ENCODE measurements at regions of chrX and their contacts with region 1.

Region 1: GRCh38 chrX:134908356-134908755 is 82.4 kb upstream of the SMIM10 start:
- DNase-seq: peak; percentile 10 to 56 (median 20)
- ATAC-seq: peak; percentile 91
- H3K4me3 ChIP-seq: no peak overlapping the region
- H3K27ac ChIP-seq: no peak overlapping the region
- H3K4me1 ChIP-seq: peaks cover 8 to 10% of the 10 kb centered on the region in 2 experiments; a peak in 4 of 5 replicates
- H3K27me3 ChIP-seq: no peaks in the 10 kb centered on the region
- CTCF ChIP-seq: peak; percentile 23 to 66 (median 60); a peak in 4 of 6 replicates
- EP300 ChIP-seq: no peak
- POLR2A ChIP-seq: no peak
- RAD21 ChIP-seq: peak; percentile 70 to 72

Region 2: DNA sequence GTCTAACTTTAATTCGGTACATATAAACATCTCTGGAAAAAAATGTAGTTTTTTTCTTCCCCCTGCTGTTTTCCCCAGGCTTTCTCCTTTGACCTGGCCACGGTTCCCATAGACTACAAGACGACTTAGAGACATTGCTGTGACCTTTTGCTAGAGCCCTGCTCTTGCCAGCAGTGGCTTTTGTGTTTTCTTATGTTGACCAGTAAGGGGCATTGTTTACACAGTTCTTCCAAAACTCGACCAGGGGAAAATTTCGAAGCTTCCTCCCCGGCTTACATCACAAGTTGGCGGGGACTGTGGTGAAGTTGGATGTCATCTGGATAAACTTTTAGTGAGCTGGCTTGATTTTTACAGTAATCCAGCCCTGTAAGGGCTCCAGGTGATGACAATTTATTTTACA is 662.1 kb before region 1 on chrX:
- CTCF ChIA-PET with region 1: no interaction called
- POLR2A ChIA-PET with region 1: no interaction called
- in situ Hi-C with region 1: no loop called
- intact Hi-C with region 1: loop called (anchors 10 kb)
- DNase-seq: peak in 2 of 4 experiments; percentile 11 to 26
- ATAC-seq: peak; percentile 72
- H3K4me3 ChIP-seq: no peak overlapping the region
- H3K27ac ChIP-seq: no peak overlapping the region
- H3K4me1 ChIP-seq: no peaks in the 10 kb centered on the region
- H3K27me3 ChIP-seq: no peaks in the 10 kb centered on the region
- CTCF ChIP-seq: peak; percentile 7 to 39 (median 26); a peak in 3 of 6 replicates
- EP300 ChIP-seq: no peak
- POLR2A ChIP-seq: no peak
- RAD21 ChIP-seq: peak; percentile 48 to 50; a peak in 3 of 4 replicates

Region 3: DNA sequence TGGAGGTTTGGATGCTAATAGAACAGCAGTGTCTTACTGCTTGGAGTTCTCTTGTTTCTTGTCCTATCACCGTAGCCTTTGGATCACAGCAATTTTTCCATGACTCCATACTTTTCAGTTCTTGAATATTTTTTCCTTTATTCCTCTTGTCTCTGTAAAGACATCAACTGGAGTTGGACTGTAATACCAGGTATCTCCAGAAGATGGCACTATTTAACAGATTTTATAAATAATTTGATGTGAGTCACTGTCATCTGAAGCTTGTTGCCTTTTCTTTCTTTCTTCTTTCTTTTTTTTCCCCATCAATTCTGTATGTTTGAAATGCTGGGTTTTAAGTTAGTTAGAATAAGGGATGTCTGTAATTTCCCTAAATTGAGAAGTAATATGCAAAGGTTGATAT is 424.3 kb before region 1 on chrX:
- CTCF ChIA-PET with region 1: interaction called, 3 read pairs
- POLR2A ChIA-PET with region 1: no interaction called
- in situ Hi-C with region 1: no loop called
- intact Hi-C with region 1: loop called (anchors 5 kb)
- DNase-seq: peak; percentile 10 to 57 (median 17)
- ATAC-seq: peak; percentile 64; the same call in 2 of the 3 replicates
- H3K4me3 ChIP-seq: no peak overlapping the region
- H3K27ac ChIP-seq: no peak overlapping the region
- H3K4me1 ChIP-seq: no peaks in the 10 kb centered on the region
- H3K27me3 ChIP-seq: no peaks in the 10 kb centered on the region
- CTCF ChIP-seq: peak; percentile 33 to 63 (median 48); a peak in 4 of 6 replicates
- EP300 ChIP-seq: no peak
- POLR2A ChIP-seq: no peak
- RAD21 ChIP-seq: peak; percentile 67 to 68

Region 4: DNA sequence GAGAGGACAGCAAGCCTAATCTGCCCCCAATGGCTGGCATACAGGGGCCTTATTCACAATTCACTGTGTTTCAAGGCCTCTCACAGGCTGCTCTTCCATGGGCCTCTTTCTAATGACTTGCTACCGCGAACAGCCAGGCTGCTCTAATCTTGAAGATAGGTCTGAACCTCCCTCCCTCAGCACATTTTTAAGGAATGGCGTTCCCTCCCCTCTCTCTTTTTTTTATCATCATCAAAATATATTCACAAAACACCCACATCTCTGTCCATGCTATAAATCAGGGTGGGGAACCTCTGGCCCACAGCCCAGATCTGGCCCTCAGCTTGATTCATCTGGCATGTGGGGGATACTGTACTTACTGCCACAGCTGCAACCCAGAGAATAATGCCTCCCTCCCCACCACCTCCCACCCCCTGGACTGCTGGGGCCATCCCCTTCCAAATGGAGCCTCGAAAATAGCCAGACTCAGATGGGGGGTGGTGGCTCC is 173.8 kb before region 1 on chrX:
- CTCF ChIA-PET with region 1: no interaction called
- POLR2A ChIA-PET with region 1: interaction called, 4 read pairs
- in situ Hi-C with region 1: no loop called
- intact Hi-C with region 1: loop called (anchors 10 kb)
- DNase-seq: no peak
- ATAC-seq: no peak
- H3K4me3 ChIP-seq: no peak overlapping the region
- H3K27ac ChIP-seq: no peak overlapping the region
- H3K4me1 ChIP-seq: peaks cover 0 to 17% of the 10 kb centered on the region in 2 experiments; a peak in 4 of 5 replicates
- H3K27me3 ChIP-seq: no peaks in the 10 kb centered on the region; a peak in 1 of 5 replicates
- CTCF ChIP-seq: no peak
- EP300 ChIP-seq: no peak
- POLR2A ChIP-seq: no peak
- RAD21 ChIP-seq: no peak

Region 5: DNA sequence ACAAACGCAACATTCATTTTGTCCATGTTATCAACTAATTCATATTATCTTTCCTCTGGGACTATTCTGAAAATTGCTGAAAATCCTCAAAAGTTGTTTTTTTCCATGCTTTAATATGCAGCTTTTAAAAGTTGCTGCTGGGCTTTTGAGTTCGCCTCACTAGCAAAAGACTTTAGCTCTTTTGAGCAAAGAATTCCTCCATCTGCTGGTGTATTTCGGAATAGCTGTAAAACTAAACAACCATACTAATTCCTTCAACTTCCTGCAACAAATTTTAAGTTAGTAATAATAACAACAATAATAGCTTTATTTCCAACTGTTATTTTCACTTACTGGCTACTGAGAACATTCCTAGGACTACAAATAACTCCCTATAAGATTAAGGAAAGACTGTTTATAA is 125.6 kb before region 1 on chrX:
- CTCF ChIA-PET with region 1: no interaction called
- POLR2A ChIA-PET with region 1: no interaction called
- in situ Hi-C with region 1: loop called (anchors 10 kb)
- intact Hi-C with region 1: no loop called
- DNase-seq: peak in 1 of 4 experiments; percentile 35
- ATAC-seq: 0 out of 3 replicates have a peak, but pooled peaks have one; percentile 42
- H3K4me3 ChIP-seq: no peak overlapping the region
- H3K27ac ChIP-seq: no peak overlapping the region
- H3K4me1 ChIP-seq: no peaks in the 10 kb centered on the region
- H3K27me3 ChIP-seq: no peaks in the 10 kb centered on the region
- CTCF ChIP-seq: peak; percentile 32 to 52 (median 43); a peak in 5 of 6 replicates
- EP300 ChIP-seq: no peak
- POLR2A ChIP-seq: no peak
- RAD21 ChIP-seq: peak; percentile 57 to 65

Region 6: DNA sequence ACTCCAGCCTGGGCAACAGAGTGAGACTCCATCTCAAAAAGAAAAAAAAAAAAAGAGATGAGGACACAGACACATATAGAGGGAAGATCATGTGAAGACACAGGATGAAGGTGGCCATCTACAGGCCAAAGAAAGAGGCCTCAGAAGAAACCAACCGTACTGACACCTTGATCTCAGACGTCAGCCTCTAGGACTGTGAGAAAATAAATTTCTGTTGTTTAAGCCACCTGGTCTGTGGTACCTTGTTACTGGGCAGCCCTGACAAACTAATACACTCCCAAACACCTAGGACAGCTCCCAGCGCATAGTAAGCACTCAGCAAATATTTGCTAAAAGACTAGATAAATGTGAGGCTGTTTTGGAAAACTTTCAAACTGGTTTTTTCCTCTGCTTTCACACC is 23.2 kb after region 1 on chrX:
- CTCF ChIA-PET with region 1: no interaction called
- POLR2A ChIA-PET with region 1: no interaction called
- in situ Hi-C with region 1: no loop called
- intact Hi-C with region 1: no loop called
- DNase-seq: peak in 1 of 4 experiments; percentile 29
- ATAC-seq: peak; percentile 82
- H3K4me3 ChIP-seq: no peak overlapping the region
- H3K27ac ChIP-seq: no peak overlapping the region
- H3K4me1 ChIP-seq: peaks cover 0 to 14% of the 10 kb centered on the region in 2 experiments; a peak in 3 of 5 replicates
- H3K27me3 ChIP-seq: no peaks in the 10 kb centered on the region; a peak in 1 of 5 replicates
- CTCF ChIP-seq: peak; percentile 3 to 37 (median 26); a peak in 2 of 6 replicates
- EP300 ChIP-seq: no peak
- POLR2A ChIP-seq: no peak
- RAD21 ChIP-seq: no peak; a peak in 1 of 4 replicates

Measured in K562 (cell line).